ENCODE measurements at regions of chr17 and their contacts with region 1.

Region 1: GRCh38 chr17:28967221-28968140 is 16.2 kb upstream of the PHF12 start:
- DNase-seq: no peak
- H3K4me3 ChIP-seq: no peak overlapping the region
- H3K27ac ChIP-seq: no peak overlapping the region
- H3K4me1 ChIP-seq: no peaks in the 10 kb centered on the region
- H3K27me3 ChIP-seq: no peaks in the 10 kb centered on the region
- CTCF ChIP-seq: no peak
- POLR2A ChIP-seq: no peak

Region 2: DNA sequence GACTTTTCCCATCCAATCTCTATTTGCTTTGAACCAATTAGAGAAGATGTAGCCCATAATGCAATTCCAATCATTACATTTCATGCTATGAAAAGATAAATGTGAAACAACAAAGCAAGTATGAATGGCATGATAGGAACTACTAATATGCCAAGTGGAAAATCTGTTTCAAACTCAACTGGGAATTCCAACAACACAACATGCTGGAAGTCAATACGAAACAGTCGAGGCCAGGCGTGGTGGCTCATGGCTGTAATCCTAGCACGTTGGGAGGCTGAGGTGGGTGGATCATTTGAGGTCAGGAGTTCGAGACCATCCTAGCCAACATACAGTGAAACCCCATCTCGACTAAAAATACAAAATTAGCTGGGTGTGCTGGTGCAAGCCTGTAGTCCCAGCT is 688.0 kb before region 1 on chr17:
- intact Hi-C with region 1: no loop called
- DNase-seq: no peak
- H3K4me3 ChIP-seq: no peak overlapping the region
- H3K27ac ChIP-seq: no peak overlapping the region
- H3K4me1 ChIP-seq: peaks cover 3 to 7% of the 10 kb centered on the region in 2 donors
- H3K27me3 ChIP-seq: no peaks in the 10 kb centered on the region
- CTCF ChIP-seq: no peak
- POLR2A ChIP-seq: no peak

Region 3: GRCh38 chr17:29116804-29117772 is 149.6 kb after region 1 on chr17:
- intact Hi-C with region 1: loop called (anchors 2 kb)
- DNase-seq: peak; percentile 63 to 90 (median 79)
- H3K4me3 ChIP-seq: no peak overlapping the region
- H3K27ac ChIP-seq: no peak overlapping the region
- H3K4me1 ChIP-seq: peaks cover 0 to 5% of the 10 kb centered on the region in 2 donors
- H3K27me3 ChIP-seq: no peaks in the 10 kb centered on the region
- CTCF ChIP-seq: peak; percentile 83 to 97 (median 88)
- POLR2A ChIP-seq: no peak